ENCODE measurements at regions of chr3 and their contacts with region 1.

Region 1: DNA sequence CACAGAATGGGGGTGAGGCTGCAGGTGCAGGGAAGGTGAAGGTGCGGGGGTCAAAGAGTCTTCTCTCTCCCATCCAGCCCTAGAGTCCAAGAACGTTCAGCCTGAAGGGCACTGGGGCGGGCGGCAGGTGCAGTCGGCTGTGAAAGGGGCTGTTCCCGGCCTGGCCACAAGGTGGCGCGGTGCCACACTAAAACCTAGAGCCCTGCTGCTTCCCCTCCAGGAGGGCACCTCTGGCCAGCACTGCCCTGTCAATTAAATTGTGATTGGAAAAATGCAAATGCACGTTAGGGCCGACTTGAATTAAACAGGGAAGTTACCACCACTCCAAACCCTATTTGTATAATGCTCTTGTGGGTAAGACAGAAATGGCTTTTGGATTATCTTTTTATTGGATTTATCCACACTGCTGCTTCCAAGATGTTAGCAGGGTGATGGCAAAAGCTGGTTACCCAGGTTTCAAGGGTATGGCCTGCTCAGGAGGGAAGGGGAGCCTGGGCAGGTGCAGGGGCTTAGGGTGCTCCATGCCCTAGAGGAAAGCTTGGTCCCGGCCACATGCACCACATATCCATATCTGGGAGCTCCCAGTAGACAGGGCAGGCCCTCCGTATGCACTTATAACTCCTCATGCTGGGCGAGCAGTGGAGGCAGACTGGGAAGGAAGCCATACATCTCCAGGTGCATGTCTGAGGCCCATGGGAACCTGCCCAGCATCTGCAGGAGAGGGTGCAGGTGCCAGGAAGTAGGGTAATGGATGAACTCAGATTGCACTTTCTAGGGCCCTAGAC is 119.8 kb downstream of the ADCY5 start:
- DNase-seq: peak in 1 of 2 donors; percentile 88
- H3K4me3 ChIP-seq: no peak overlapping the region
- H3K27ac ChIP-seq: peak overlapping the region; percentile 86
- H3K4me1 ChIP-seq: peaks cover 14 to 66% of the 10 kb centered on the region in 2 donors
- H3K27me3 ChIP-seq: no peaks in the 10 kb centered on the region
- CTCF ChIP-seq: peak; percentile 93 to 96 (median 96)

Region 2: GRCh38 chr3:123373474-123373987 is 44.5 kb after region 1 on chr3:
- intact Hi-C with region 1: loop called (anchors 2 kb)
- DNase-seq: no peak
- H3K4me3 ChIP-seq: no peak overlapping the region
- H3K27ac ChIP-seq: peak overlapping the region; percentile 80 to 82
- H3K4me1 ChIP-seq: peaks cover 11 to 63% of the 10 kb centered on the region in 2 donors
- H3K27me3 ChIP-seq: no peaks in the 10 kb centered on the region
- CTCF ChIP-seq: no peak

Region 3: DNA sequence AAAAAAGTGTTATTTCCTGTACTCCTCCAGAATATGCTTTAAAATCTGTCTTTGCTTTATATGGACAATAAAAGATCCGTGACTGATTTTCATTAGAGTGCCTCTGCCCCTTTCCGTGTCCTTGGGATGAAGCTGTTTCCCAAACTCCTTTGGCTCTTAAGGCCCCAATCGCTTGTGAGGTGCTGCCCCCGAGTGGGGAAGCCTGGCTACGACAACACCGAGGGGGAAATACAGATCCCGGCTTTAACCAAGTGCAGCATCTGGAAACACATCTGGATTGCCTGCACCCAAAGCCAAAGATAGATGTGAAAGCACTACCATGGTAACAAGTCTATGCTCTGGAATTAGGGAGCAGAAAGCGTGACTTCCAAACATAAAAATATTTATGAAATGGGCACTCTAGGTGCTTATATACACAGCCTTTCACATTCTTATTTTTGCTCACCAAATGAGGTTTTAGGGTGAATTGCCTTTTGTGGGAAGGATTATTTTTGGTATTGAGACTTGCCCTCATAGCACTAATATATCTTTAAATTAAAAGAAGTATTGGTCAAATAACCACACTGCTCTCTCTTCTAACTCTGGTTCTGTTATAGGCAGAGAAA is 160.5 kb after region 1 on chr3:
- intact Hi-C with region 1: loop called (anchors 1 kb)
- DNase-seq: peak in 1 of 2 donors; percentile 86
- H3K4me3 ChIP-seq: peak overlapping the region in 1 of 2 donors; percentile 32
- H3K27ac ChIP-seq: peak overlapping the region; percentile 76
- H3K4me1 ChIP-seq: peaks cover 0 to 14% of the 10 kb centered on the region in 2 donors
- H3K27me3 ChIP-seq: no peaks in the 10 kb centered on the region
- CTCF ChIP-seq: peak; percentile 88 to 96 (median 92)

Region 4: DNA sequence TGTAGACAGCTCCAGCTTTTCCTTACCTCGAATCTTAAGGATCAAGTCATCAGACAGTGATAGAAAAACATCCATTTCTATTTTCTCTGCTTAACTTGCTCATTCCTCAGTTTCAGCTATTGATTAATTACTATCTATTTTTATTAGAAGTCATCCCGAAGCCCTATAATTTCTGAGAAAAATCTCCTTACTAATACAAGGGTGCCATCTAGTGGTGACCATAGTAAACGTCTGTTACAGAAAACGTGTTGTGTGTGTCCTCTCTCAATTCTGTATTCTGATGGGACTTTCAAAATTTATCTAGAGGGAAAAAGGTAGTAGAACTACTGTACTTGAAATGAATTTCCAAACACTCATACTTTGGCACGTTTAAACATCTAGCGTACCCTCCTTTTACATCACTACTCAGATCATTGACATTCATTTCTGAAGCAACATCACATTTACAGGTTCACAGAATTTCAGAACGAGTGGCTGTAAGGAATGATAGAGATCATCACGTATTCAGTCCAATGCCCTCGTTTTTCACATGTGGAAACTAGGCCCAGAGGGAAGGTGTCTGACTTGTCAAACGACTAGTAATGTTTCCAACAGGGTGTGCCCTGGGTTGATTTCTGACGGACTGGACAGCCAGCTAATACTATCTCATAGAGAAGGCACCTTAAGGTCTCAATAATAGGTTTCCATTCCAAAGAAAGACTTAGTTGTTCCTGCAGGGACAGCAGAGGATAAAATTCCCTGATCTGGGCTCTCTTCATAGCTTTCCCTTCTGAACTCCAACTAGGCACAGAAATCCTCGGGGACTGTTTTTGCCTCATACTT is 230.2 kb after region 1 on chr3:
- intact Hi-C with region 1: loop called (anchors 2 kb)
- DNase-seq: no peak
- H3K4me3 ChIP-seq: no peak overlapping the region
- H3K27ac ChIP-seq: no peak overlapping the region
- H3K4me1 ChIP-seq: no peaks in the 10 kb centered on the region
- H3K27me3 ChIP-seq: no peaks in the 10 kb centered on the region
- CTCF ChIP-seq: peak; percentile 66 to 81 (median 80)

Measured in ascending aorta (tissue), 2 donors.